Endothelial cell of umbilical vein (primary cell): ENCODE measurements at regions of chr1 and their contacts with region 1.

Region 1: DNA sequence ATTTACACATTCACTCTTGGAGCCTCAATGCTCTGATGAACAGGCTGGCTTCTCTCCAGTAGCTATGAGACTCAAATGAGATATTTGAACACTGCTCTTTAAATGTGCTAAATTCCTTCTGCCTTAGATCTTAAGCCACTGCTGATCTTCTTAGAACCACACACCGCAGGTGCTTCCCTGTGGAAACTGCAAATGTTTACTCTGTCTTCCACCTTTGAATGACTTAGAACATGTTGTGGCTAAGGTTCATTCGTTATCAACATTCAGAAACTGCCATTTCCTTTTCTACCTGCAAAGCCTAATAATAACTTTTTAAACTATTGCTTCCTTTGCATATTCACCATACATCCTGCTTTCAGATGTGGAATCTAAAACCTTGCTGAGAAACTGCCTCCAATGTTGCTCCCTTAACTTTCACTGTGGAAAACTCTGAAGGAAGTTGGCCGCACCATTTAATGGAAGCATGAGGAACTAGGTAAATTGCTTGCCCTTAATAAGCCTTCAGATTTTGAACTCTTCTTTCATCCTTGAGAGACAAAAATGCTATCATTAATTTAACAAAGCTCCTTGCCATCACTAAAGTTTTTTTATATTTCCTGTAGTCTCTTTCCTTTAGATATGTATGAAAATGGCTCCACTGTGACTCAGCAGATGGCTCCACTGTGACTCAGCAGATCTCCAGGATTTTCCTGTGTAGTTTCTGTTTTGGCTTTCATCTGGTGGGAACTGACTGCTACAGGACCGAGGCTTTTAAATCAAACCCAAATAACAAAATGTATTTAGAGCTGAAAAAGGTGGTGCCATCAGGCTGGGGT is 143.8 kb downstream of the TNFSF18 start:
- DNase-seq: peak; percentile 96
- H3K4me3 ChIP-seq: no peak overlapping the region
- H3K27ac ChIP-seq: peak overlapping the region; percentile 88
- H3K4me1 ChIP-seq: peaks cover 84% of the 10 kb centered on the region
- H3K27me3 ChIP-seq: no peaks in the 10 kb centered on the region
- CTCF ChIP-seq: no peak
- POLR2A ChIP-seq: peak; percentile 58

Region 2: GRCh38 chr1:172863031-172863430 is 44.0 kb before region 1 on chr1:
- CTCF ChIA-PET with region 1: interaction called, 4 read pairs
- POLR2A ChIA-PET with region 1: no interaction called
- dilution Hi-C with region 1: no loop called
- intact Hi-C with region 1: loop called (anchors 1 kb)
- DNase-seq: no peak
- H3K4me3 ChIP-seq: no peak overlapping the region
- H3K27ac ChIP-seq: no peak overlapping the region
- H3K4me1 ChIP-seq: peaks cover 17% of the 10 kb centered on the region
- H3K27me3 ChIP-seq: no peaks in the 10 kb centered on the region
- CTCF ChIP-seq: no peak
- POLR2A ChIP-seq: no peak

Region 3: GRCh38 chr1:172934417-172934762 is 27.4 kb after region 1 on chr1:
- CTCF ChIA-PET with region 1: interaction called, 5 read pairs
- POLR2A ChIA-PET with region 1: interaction called, 9 read pairs
- dilution Hi-C with region 1: no loop called
- intact Hi-C with region 1: loop called (anchors 1 kb)
- DNase-seq: no peak
- H3K4me3 ChIP-seq: no peak overlapping the region
- H3K27ac ChIP-seq: peak overlapping the region; percentile 90
- H3K4me1 ChIP-seq: peaks cover 53% of the 10 kb centered on the region
- H3K27me3 ChIP-seq: no peaks in the 10 kb centered on the region
- CTCF ChIP-seq: no peak
- POLR2A ChIP-seq: no peak

Region 4: DNA sequence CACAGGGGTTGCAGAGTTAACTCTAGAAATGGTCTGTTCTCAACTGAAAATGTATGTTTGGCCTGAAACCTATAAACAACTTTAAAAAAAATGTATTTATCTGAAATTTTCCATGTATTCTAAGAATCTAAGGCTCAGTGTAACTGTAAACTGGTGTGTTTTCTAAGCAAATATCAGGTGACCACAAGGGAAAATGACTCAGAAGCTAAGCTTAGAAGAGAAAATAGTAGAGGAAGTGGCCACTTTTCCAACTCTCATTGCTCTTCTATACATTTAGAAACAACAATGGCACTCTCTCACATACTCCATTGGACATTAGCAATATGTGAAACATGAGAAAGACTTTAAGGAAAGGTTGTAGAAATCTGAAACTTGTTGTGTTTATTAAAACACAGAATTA is 136.3 kb after region 1 on chr1:
- CTCF ChIA-PET with region 1: no interaction called
- POLR2A ChIA-PET with region 1: no interaction called
- dilution Hi-C with region 1: no loop called
- intact Hi-C with region 1: loop called (anchors 1 kb)
- DNase-seq: peak; percentile 80
- H3K4me3 ChIP-seq: peak overlapping the region in 1 of 3 experiments; percentile 7
- H3K27ac ChIP-seq: peak overlapping the region; percentile 83
- H3K4me1 ChIP-seq: peaks cover 35% of the 10 kb centered on the region
- H3K27me3 ChIP-seq: no peaks in the 10 kb centered on the region
- CTCF ChIP-seq: no peak
- POLR2A ChIP-seq: no peak

Region 5: GRCh38 chr1:173202430-173203145 is 295.6 kb after region 1 on chr1:
- CTCF ChIA-PET with region 1: interaction called, 17 read pairs
- POLR2A ChIA-PET with region 1: interaction called, 9 read pairs
- dilution Hi-C with region 1: no loop called
- intact Hi-C with region 1: loop called (anchors 1 kb)
- DNase-seq: peak; percentile 90
- H3K4me3 ChIP-seq: peak overlapping the region; percentile 9 to 98 (median 91)
- H3K27ac ChIP-seq: peak overlapping the region; percentile 87
- H3K4me1 ChIP-seq: peaks cover 47% of the 10 kb centered on the region
- H3K27me3 ChIP-seq: no peaks in the 10 kb centered on the region
- CTCF ChIP-seq: peak; percentile 39 to 59
- POLR2A ChIP-seq: no peak